ENCODE measurements at regions of chr12 and their contacts with region 1.

Region 1: GRCh38 chr12:44859998-44860689 is 16.0 kb downstream of the NELL2 start:
- DNase-seq: no peak
- H3K4me3 Mint-ChIP-seq: peak overlapping the region; percentile 0
- H3K27ac Mint-ChIP-seq: peak overlapping the region; percentile 88
- H3K4me1 Mint-ChIP-seq: peaks cover 77% of the 10 kb centered on the region
- H3K27me3 Mint-ChIP-seq: no peaks in the 10 kb centered on the region

Region 2: GRCh38 chr12:44804068-44804467 is 56.1 kb before region 1 on chr12:
- CTCF ChIA-PET with region 1: no interaction called
- intact Hi-C with region 1: no loop called
- DNase-seq: no peak
- H3K4me3 Mint-ChIP-seq: no peak overlapping the region
- H3K27ac Mint-ChIP-seq: no peak overlapping the region
- H3K4me1 Mint-ChIP-seq: peaks cover 11% of the 10 kb centered on the region
- H3K27me3 Mint-ChIP-seq: no peaks in the 10 kb centered on the region

Region 3: GRCh38 chr12:44817687-44818086 is 42.5 kb before region 1 on chr12:
- CTCF ChIA-PET with region 1: no interaction called
- intact Hi-C with region 1: no loop called
- DNase-seq: peak; percentile 58
- H3K4me3 Mint-ChIP-seq: no peak overlapping the region
- H3K27ac Mint-ChIP-seq: peak overlapping the region; percentile 44
- H3K4me1 Mint-ChIP-seq: peaks cover 67% of the 10 kb centered on the region
- H3K27me3 Mint-ChIP-seq: no peaks in the 10 kb centered on the region

Region 4: GRCh38 chr12:44827832-44828438 is 32.2 kb before region 1 on chr12:
- CTCF ChIA-PET with region 1: interaction called, 3 read pairs
- intact Hi-C with region 1: loop called (anchors 1 kb)
- DNase-seq: no peak
- H3K4me3 Mint-ChIP-seq: peak overlapping the region; percentile 58
- H3K27ac Mint-ChIP-seq: peak overlapping the region; percentile 89
- H3K4me1 Mint-ChIP-seq: peaks cover 64% of the 10 kb centered on the region
- H3K27me3 Mint-ChIP-seq: no peaks in the 10 kb centered on the region

Region 5: GRCh38 chr12:44835641-44836379 is 24.3 kb before region 1 on chr12:
- CTCF ChIA-PET with region 1: interaction called, 3 read pairs
- intact Hi-C with region 1: loop called (anchors 1 kb)
- DNase-seq: peak; percentile 42
- H3K4me3 Mint-ChIP-seq: peak overlapping the region; percentile 45
- H3K27ac Mint-ChIP-seq: peak overlapping the region; percentile 96
- H3K4me1 Mint-ChIP-seq: peaks cover 90% of the 10 kb centered on the region
- H3K27me3 Mint-ChIP-seq: no peaks in the 10 kb centered on the region

Measured in activated naive CD4-positive, alpha-beta T cell treated with anti-CD3 and anti-CD28 coated beads for 36 hours (primary cell).